Activated CD4-positive, alpha-beta T cell treated with anti-CD3 and anti-CD28 coated beads for 36 hours (primary cell): ENCODE measurements at regions of chr11 and their contacts with region 1.

Region 1: DNA sequence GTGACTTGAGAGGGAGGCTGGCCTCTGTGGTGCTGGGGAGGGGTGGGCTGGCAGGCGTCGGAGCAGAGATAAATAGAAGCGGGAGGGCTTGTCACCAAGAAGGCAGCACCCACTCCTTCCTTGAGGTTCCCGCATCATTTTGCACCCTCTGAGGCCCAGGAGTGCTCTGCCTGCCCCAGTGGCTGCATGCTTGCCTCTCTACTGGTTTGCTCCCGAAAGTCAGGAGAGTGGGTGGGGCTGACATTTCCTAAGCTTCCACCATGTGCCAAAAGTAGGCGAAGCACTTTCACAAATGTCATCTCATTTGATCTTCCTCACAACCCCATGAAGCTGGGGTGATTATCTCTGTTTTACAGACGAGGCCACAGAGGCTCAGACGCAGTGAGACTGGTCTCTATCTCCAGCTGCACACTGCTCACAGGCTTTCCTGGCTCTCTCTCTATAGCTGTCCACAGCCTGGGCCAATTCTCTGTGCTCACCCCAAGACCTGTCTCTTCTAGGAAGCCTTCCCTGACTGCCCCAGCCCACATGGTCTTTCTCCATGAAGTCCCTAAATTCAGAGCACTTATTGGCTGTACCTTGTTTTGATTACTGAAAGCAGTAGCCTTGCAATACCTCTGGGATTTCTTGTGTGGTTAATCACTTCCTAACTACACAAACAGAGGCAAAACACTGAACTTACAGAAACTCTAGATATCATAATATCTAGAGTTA is 2.6 kb upstream of the UCP3 start:
- DNase-seq: peak; percentile 73
- ATAC-seq: peak; percentile 78
- H3K4me3 Mint-ChIP-seq: no peak overlapping the region
- H3K27ac Mint-ChIP-seq: peak overlapping the region; percentile 83
- H3K4me1 Mint-ChIP-seq: peaks cover 83% of the 10 kb centered on the region
- H3K27me3 Mint-ChIP-seq: no peaks in the 10 kb centered on the region

Region 2: DNA sequence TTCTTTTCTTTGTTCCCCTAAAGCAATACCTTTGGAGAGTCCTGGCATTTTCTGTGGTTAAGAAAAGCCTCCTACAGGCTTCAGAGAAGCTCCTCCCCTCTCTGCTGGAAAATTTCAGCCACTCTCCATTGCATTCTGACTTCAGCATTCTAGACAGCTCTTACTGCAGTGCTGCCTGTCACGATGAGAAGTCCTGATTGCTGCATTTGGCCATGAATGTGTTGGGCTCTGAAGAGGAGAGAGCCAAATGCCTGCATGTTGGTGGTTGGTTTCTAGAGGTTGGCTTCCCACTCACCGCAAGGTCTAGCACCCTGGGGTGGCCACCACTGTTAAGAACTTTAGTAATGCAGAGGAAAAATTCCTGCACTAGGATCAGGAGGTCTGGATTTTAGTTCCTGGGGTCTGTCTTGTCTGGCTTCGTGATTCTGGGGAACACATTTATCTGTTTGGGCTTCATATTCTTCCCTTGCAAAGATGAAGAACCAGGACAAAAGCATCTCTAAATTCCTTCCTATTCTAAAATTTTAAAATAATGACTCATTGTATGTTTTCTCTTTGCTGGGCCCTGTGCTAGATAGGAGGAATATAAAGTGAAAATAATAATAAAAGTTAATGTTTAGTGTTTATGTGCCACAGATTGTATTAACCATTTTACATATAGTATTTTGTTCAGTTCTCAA is 172.9 kb before region 1 on chr11:
- CTCF ChIA-PET with region 1: no interaction called
- POLR2A ChIA-PET with region 1: no interaction called
- intact Hi-C with region 1: no loop called
- DNase-seq: no peak
- ATAC-seq: no peak
- H3K4me3 Mint-ChIP-seq: no peak overlapping the region
- H3K27ac Mint-ChIP-seq: no peak overlapping the region
- H3K4me1 Mint-ChIP-seq: no peaks in the 10 kb centered on the region
- H3K27me3 Mint-ChIP-seq: no peaks in the 10 kb centered on the region

Region 3: DNA sequence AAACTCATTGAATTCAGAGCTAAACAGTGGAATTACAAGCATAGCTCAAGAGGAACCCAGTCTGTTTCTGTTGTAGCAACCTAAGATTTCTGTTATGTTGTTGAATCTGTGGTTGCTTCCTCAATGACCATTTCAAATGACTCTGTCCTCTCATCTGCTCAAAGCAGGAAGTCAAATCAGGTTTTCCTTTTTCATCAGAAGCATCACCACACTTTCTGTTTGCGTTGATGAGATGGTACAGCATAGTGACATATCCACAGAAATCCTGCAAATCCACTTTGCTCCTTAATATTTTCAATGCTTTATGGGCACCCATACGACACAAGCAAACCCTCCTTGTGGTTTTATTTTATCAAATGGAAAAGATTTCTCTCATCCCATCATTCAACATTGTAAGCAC is 16.3 kb before region 1 on chr11:
- CTCF ChIA-PET with region 1: interaction called, 8 read pairs
- POLR2A ChIA-PET with region 1: interaction called, 27 read pairs
- intact Hi-C with region 1: loop called (anchors 1 kb)
- DNase-seq: no peak
- ATAC-seq: peak; percentile 80
- H3K4me3 Mint-ChIP-seq: peak overlapping the region; percentile 37
- H3K27ac Mint-ChIP-seq: peak overlapping the region; percentile 92
- H3K4me1 Mint-ChIP-seq: peaks cover 72% of the 10 kb centered on the region
- H3K27me3 Mint-ChIP-seq: no peaks in the 10 kb centered on the region

Region 4: GRCh38 chr11:74024261-74025029 is 12.9 kb after region 1 on chr11:
- CTCF ChIA-PET with region 1: interaction called, 6 read pairs
- POLR2A ChIA-PET with region 1: interaction called, 6 read pairs
- intact Hi-C with region 1: loop called (anchors 1 kb)
- DNase-seq: peak; percentile 64
- ATAC-seq: peak; percentile 9
- H3K4me3 Mint-ChIP-seq: no peak overlapping the region
- H3K27ac Mint-ChIP-seq: peak overlapping the region; percentile 61
- H3K4me1 Mint-ChIP-seq: peaks cover 29% of the 10 kb centered on the region
- H3K27me3 Mint-ChIP-seq: no peaks in the 10 kb centered on the region